Sciatic nerve (tissue), 2 donors: ENCODE measurements at regions of chr6 and their contacts with region 1.

Region 1: GRCh38 chr6:161772176-161772575 is 498.3 kb upstream of the AGPAT4 start:
- DNase-seq: no peak
- ATAC-seq: no peak

Region 2: DNA sequence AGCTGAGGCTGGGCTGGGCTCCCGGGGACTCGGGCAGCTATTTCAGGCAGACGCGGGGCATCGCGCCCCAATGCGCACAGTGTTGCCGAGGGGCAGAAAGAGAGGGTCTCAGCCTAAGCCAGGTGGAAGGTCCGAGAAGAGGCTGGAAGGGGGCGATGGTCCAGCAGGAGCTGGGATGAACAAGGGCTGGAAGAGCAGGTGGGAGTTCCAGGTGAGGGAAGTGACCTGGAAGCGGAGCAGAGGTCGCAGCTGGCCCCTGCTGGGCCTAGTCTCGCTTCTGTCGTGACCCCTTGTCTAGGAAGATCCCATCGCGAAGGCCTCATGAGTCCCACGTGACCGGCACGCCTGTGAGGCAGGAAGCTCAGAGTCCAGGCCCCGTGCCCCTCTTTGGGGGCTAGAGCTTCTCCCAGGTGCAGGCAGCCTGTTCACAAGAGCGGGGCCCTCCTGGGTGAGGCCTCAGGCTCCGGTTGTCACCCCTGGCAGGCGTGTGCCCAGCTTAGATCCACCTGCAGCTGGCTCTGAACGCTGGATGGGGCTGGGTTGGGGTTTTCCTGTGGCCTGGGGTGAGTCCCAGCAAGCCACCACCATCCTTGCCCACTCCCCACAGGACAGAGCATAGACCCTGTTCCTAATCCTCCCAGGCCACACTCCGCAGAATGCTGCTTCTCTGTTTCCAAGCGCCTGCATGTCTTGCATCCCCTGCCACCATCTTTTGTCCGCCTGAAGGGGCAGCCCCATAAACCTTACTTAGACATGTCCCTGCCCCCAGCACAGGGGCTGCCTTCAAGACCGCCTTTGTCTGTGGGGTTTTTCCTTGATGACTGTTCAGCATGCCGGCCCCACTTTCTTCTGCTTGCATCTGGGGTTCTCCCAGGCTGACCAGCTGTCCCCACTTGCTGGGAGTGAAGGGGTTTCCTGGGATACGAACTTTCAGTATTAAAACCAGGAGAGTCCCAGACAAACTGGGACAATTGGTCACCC is 1408.9 kb before region 1 on chr6:
- intact Hi-C with region 1: loop called (anchors 5 kb)
- DNase-seq: no peak
- ATAC-seq: peak; percentile 9

Region 3: DNA sequence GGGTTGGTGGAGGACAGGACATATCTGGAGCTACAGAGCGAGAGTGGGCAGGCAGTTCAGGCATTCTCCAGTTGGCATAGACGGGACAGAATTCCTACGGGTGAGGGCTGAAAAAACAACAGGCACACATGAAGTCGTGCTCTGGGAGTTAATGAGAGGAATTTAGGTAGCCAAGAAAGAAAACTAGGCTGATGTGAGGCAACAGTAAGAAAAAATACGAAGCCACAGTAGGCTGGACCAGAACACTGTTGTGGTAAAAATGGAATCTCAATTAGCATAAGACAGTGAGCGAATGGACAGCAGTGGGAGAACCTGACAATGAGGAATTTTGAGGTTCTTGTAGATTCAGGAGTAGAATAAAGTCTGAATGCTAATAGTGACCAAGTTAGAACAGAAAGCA is 10.2 kb before region 1 on chr6:
- intact Hi-C with region 1: no loop called
- DNase-seq: no peak
- ATAC-seq: no peak